GM12878 (cell line): ENCODE measurements at regions of chr20 and their contacts with region 1.

Region 1: GRCh38 chr20:11926292-11926998 is 8.8 kb downstream of the BTBD3 start:
- DNase-seq: no peak
- ATAC-seq: no peak
- H3K4me3 ChIP-seq: no peak overlapping the region
- H3K27ac ChIP-seq: no peak overlapping the region
- H3K4me1 ChIP-seq: no peaks in the 10 kb centered on the region
- H3K27me3 ChIP-seq: no peaks in the 10 kb centered on the region
- CTCF ChIP-seq: no peak
- EP300 ChIP-seq: no peak
- POLR2A ChIP-seq: no peak
- RAD21 ChIP-seq: no peak

Region 2: DNA sequence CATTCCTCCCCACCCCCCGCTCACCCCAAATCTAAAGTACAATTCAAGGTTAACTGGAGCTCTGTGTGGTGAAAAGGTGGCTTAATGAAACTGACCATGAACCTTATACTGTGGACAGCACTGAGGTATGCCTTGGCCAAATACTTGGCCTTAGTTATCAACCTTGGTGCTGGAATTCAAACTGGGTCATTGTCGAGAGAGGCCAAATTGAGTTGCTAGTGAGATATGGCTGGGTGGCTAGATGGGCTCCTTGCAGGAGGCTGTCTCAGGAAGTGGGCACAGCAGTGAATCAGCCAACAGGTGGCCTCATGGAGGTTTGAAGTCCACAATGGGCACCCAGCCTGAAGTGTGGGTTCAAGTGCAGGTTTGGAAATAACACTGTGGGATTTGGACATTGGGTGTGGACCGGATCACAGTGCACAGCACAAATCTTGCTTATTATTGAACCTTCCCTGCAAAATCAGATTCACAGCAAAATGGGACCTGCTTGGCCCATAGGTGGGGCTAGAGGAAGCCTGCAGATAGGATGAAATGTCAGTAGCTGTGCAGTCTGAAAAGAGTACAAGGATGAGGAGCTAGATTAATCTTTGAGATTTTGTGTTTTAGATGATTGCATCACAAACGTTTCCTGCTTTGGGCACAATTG is 14.3 kb before region 1 on chr20:
- CTCF ChIA-PET with region 1: interaction called, 21 read pairs
- POLR2A ChIA-PET with region 1: no interaction called
- RAD21 ChIA-PET with region 1: interaction called, 3 read pairs
- SMC1A ChIA-PET with region 1: interaction called, 7 read pairs
- in situ Hi-C with region 1: no loop called
- intact Hi-C with region 1: no loop called
- DNase-seq: no peak
- ATAC-seq: peak; percentile 80
- H3K4me3 ChIP-seq: no peak overlapping the region
- H3K27ac ChIP-seq: no peak overlapping the region
- H3K4me1 ChIP-seq: no peaks in the 10 kb centered on the region
- H3K27me3 ChIP-seq: no peaks in the 10 kb centered on the region
- CTCF ChIP-seq: peak; percentile 38 to 50 (median 40); a peak in 4 of 6 replicates
- EP300 ChIP-seq: no peak
- POLR2A ChIP-seq: no peak
- RAD21 ChIP-seq: peak; percentile 25; the same call in 1 of the 2 replicates